ENCODE measurements at regions of chrX and their contacts with region 1.

Region 1: GRCh38 chrX:151680805-151681204 is 14.5 kb upstream of the PRRG3 start:
- H3K4me3 Mint-ChIP-seq: no peak overlapping the region
- H3K27ac Mint-ChIP-seq: no peak overlapping the region
- H3K4me1 Mint-ChIP-seq: peaks cover 5% of the 10 kb centered on the region
- H3K27me3 Mint-ChIP-seq: peaks cover 6% of the 10 kb centered on the region

Region 2: DNA sequence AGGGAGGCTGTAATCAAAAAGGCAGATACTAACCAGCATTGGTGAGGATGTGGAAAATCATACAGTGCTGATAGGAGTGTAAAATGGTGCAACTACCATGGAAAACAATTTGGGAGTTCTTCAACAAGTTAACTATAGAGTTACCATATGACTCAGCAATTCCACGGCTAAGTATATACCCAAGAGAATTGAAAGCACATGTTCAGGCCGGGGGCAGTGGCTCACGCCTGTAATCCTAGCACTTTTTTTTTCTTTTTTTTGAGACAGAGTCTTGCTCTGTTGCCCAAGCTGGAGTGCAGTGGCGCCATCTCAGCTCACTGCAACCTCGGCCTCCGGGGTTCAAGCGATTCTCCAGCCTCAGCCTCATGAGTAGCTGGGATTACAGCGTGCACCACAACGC is 767.3 kb before region 1 on chrX:
- intact Hi-C with region 1: no loop called
- H3K4me3 Mint-ChIP-seq: no peak overlapping the region
- H3K27ac Mint-ChIP-seq: no peak overlapping the region
- H3K4me1 Mint-ChIP-seq: no peaks in the 10 kb centered on the region
- H3K27me3 Mint-ChIP-seq: no peaks in the 10 kb centered on the region

Region 3: GRCh38 chrX:151151665-151152267 is 529.0 kb before region 1 on chrX:
- intact Hi-C with region 1: loop called (anchors 1 kb)
- H3K4me3 Mint-ChIP-seq: no peak overlapping the region
- H3K27ac Mint-ChIP-seq: no peak overlapping the region
- H3K4me1 Mint-ChIP-seq: no peaks in the 10 kb centered on the region
- H3K27me3 Mint-ChIP-seq: peaks cover 7% of the 10 kb centered on the region

Region 4: DNA sequence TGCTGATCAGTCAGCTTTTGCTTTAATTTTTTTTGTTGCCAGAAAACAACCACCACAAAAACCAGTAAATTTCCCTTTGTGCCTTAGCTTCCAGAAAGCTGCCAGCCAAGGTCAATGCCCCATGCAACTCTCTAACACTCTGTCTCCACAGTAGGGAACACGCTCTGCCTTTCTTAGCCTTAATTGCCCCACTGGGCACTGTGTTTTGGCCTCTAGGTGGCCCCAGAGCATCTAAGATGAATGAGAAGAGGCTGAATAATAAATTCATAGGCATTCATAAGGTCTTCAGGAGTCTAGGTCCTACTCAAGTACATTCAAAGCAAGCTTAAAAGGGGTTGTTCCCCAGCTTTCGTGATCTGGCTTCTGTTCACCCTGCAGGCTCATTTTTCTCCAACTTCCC is 175.0 kb before region 1 on chrX:
- intact Hi-C with region 1: loop called (anchors 2 kb)
- H3K4me3 Mint-ChIP-seq: no peak overlapping the region
- H3K27ac Mint-ChIP-seq: no peak overlapping the region
- H3K4me1 Mint-ChIP-seq: no peaks in the 10 kb centered on the region
- H3K27me3 Mint-ChIP-seq: peaks cover 2% of the 10 kb centered on the region

Region 5: DNA sequence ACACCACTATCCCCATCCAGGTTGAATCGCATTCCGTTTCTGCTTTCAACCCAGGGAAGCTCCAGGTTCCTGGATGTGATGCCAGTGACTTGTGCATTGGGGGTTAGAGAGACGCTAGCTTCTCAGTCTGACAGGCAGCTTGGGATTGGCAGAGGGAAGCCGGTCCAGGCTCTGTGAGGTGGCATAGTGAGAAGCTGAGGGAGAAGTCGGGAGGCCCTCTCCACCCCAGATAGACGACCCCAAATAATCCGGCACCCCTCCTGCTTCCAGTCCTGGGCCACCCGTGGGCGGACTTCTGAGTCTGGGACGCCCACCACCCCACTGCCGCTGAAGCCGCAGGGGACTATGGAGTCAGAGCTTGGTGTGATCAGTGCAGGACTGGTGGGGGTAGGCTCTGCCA is 239.3 kb after region 1 on chrX:
- intact Hi-C with region 1: no loop called
- H3K4me3 Mint-ChIP-seq: no peak overlapping the region
- H3K27ac Mint-ChIP-seq: no peak overlapping the region
- H3K4me1 Mint-ChIP-seq: no peaks in the 10 kb centered on the region
- H3K27me3 Mint-ChIP-seq: no peaks in the 10 kb centered on the region

Measured in dendritic cell treated with granulocyte-macrophage colony-stimulating factor and Interleukin-4, amounts not matched to agents 40 ng/mL and 50 ng/mL, for 4 days (primary cell).